ENCODE measurements at regions of chr3 and their contacts with region 1.

Region 1: GRCh38 chr3:145471976-145472375 is 689.0 kb downstream of the PLOD2 start:
- DNase-seq: no peak
- ATAC-seq: no peak
- H3K4me3 ChIP-seq: no peak overlapping the region
- H3K27ac ChIP-seq: no peak overlapping the region
- H3K4me1 ChIP-seq: no peaks in the 10 kb centered on the region
- H3K27me3 ChIP-seq: no peaks in the 10 kb centered on the region
- CTCF ChIP-seq: no peak
- POLR2A ChIP-seq: no peak

Region 2: DNA sequence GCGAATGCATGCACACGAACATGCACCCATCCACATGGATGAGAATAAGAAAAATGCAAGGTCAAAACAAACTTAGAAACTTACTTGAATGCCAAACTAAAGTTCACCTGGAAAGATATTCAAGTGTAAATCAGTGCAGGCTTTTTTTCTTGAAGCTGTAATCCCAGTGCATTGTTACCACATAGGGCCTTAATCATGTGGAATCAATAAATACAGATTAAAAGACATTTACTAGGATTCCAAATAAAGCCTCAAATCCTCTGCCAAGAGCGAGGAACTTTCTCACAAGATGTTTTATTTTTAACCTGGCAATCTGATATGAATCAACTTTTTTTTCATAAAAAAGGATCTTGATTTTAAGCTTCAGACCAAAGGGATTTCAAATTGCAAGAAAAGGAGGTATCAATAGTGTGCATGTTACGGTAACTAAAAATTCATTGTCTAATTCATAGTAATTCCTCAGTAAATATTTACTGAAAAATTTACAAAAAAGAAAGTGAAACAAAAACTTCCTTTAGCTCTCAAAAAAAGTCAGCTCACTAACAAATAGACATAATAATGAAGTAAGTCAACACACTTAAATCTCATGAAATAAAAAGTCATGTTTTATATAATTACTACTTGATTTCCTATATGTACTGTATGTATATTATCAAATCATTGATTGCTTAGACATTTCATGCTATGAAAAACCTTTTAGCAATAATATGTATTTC is 289.6 kb before region 1 on chr3:
- intact Hi-C with region 1: no loop called
- DNase-seq: no peak
- ATAC-seq: no peak
- H3K4me3 ChIP-seq: peak overlapping the region in 7 of 12 donors; percentile 3 to 46 (median 16)
- H3K27ac ChIP-seq: no peak overlapping the region
- H3K4me1 ChIP-seq: peaks cover 0 to 7% (median 0%) of the 10 kb centered on the region in 12 donors
- H3K27me3 ChIP-seq: no peaks in the 10 kb centered on the region
- CTCF ChIP-seq: no peak
- POLR2A ChIP-seq: no peak

Region 3: DNA sequence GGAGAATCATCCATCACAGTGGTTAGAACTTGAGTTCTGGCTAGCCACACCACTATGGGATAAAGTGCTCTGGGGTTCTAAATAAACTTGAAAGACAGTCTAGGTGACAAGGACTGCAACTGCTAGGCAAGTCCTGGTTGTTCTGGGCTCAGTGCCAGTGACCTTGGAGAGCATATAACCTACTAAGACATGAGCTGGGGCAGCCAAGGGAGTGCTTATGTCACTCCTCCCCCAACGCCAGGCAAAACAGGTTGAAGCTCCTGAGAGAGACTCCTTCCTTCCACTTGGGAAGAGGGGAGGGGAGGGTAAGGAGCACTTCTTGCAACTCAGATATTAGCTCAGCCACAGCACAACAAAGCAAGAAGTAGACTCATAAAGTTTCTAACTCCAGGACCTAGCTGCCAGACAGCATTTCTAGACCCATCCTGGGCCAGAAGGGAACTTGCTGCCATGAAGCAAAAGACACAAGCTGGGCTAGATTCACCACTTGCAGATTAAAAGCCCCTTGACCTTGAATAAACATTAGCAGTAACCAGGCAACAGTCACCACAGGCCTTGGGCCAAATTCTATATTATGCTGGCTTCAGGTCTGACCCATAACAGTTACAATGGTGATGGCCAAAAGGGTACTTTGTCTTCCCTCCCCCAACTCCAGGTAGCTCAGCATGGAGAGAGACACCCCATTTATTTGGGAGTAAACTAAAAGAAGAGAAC is 274.7 kb before region 1 on chr3:
- intact Hi-C with region 1: loop called in 1 of 10 experiments (anchors 5 kb)
- DNase-seq: peak in 1 of 5 donors; percentile 24
- ATAC-seq: no peak
- H3K4me3 ChIP-seq: no peak overlapping the region
- H3K27ac ChIP-seq: no peak overlapping the region
- H3K4me1 ChIP-seq: no peaks in the 10 kb centered on the region
- H3K27me3 ChIP-seq: no peaks in the 10 kb centered on the region
- CTCF ChIP-seq: no peak
- POLR2A ChIP-seq: no peak

Region 4: GRCh38 chr3:145518639-145519038 is 46.7 kb after region 1 on chr3:
- intact Hi-C with region 1: no loop called
- DNase-seq: no peak
- ATAC-seq: no peak
- H3K4me3 ChIP-seq: no peak overlapping the region
- H3K27ac ChIP-seq: no peak overlapping the region
- H3K4me1 ChIP-seq: no peaks in the 10 kb centered on the region
- H3K27me3 ChIP-seq: no peaks in the 10 kb centered on the region
- CTCF ChIP-seq: no peak
- POLR2A ChIP-seq: no peak

Region 5: GRCh38 chr3:146350852-146351251 is 878.9 kb after region 1 on chr3:
- intact Hi-C with region 1: no loop called
- DNase-seq: no peak
- ATAC-seq: no peak
- H3K4me3 ChIP-seq: no peak overlapping the region
- H3K27ac ChIP-seq: no peak overlapping the region
- H3K4me1 ChIP-seq: no peaks in the 10 kb centered on the region
- H3K27me3 ChIP-seq: no peaks in the 10 kb centered on the region
- CTCF ChIP-seq: no peak
- POLR2A ChIP-seq: no peak

Measured in heart left ventricle (tissue), 16 donors.